Endothelial cell of umbilical vein (primary cell): ENCODE measurements at regions of chr11 and their contacts with region 1.

Region 1: GRCh38 chr11:3037040-3037944 is 19.9 kb downstream of the CARS1 start:
- DNase-seq: peak; percentile 54
- H3K4me3 ChIP-seq: no peak overlapping the region
- H3K27ac ChIP-seq: no peak overlapping the region
- H3K4me1 ChIP-seq: no peaks in the 10 kb centered on the region
- H3K27me3 ChIP-seq: no peaks in the 10 kb centered on the region
- CTCF ChIP-seq: peak; percentile 65 to 84
- POLR2A ChIP-seq: no peak

Region 2: DNA sequence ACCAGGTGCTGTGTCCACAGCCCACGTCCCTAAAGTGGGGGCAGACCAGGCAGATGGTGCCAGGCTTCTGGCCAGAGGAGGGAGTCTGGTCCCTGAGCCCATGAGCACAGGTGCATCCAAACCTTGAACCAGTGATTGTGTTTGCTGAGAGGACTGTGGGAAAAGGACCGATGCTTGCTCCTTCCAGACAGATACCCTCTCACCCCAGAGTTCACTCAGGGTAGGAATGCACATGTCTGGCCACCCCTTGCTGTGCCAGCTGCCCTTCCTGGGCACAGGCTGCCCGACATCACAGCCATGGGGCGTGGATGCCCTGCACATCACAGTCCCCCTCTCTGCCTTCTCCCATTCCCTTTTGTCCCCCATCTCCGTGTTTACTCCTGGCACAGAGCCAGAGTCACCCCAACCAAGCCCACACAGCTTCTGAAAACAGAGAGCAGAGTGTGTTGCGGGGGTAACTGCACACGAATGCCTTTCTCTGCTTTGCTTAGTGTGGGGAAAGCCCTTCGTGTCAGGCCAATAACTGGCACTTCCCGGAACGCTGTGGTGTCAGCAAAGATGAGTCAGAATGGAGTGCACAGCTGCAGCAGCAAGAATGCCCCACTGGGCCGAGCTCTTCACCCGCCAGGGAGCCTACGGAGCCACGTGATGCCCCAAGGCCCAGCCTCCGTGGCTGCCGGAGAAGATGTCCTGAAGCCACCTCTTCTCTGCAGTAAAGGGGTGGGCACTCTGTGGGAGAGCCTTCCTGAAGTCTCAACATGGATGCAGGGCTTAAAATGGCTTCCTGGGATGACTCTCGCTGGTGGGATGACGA is 12.3 kb after region 1 on chr11:
- CTCF ChIA-PET with region 1: interaction called, 5 read pairs
- POLR2A ChIA-PET with region 1: no interaction called
- dilution Hi-C with region 1: no loop called
- intact Hi-C with region 1: loop called (anchors 2 kb)
- DNase-seq: peak; percentile 78
- H3K4me3 ChIP-seq: no peak overlapping the region
- H3K27ac ChIP-seq: peak overlapping the region; percentile 57
- H3K4me1 ChIP-seq: peaks cover 12% of the 10 kb centered on the region
- H3K27me3 ChIP-seq: no peaks in the 10 kb centered on the region
- CTCF ChIP-seq: peak; percentile 27 to 29
- POLR2A ChIP-seq: no peak

Region 3: GRCh38 chr11:3195251-3196160 is 158.2 kb after region 1 on chr11:
- CTCF ChIA-PET with region 1: interaction called, 4 read pairs
- POLR2A ChIA-PET with region 1: no interaction called
- dilution Hi-C with region 1: no loop called
- intact Hi-C with region 1: loop called (anchors 1 kb)
- DNase-seq: peak; percentile 23
- H3K4me3 ChIP-seq: no peak overlapping the region
- H3K27ac ChIP-seq: no peak overlapping the region
- H3K4me1 ChIP-seq: no peaks in the 10 kb centered on the region
- H3K27me3 ChIP-seq: no peaks in the 10 kb centered on the region
- CTCF ChIP-seq: peak; percentile 36 to 52
- POLR2A ChIP-seq: no peak

Region 4: GRCh38 chr11:3220521-3221407 is 183.5 kb after region 1 on chr11:
- CTCF ChIA-PET with region 1: interaction called, 35 read pairs
- POLR2A ChIA-PET with region 1: no interaction called
- dilution Hi-C with region 1: no loop called
- intact Hi-C with region 1: loop called (anchors 1 kb)
- DNase-seq: no peak
- H3K4me3 ChIP-seq: no peak overlapping the region
- H3K27ac ChIP-seq: no peak overlapping the region
- H3K4me1 ChIP-seq: no peaks in the 10 kb centered on the region
- H3K27me3 ChIP-seq: no peaks in the 10 kb centered on the region
- CTCF ChIP-seq: no peak
- POLR2A ChIP-seq: no peak